ENCODE measurements at regions of chr7 and their contacts with region 1.

Region 1: GRCh38 chr7:151123822-151124464 is 37.7 kb downstream of the AGAP3 start:
- DNase-seq: peak; percentile 93
- ATAC-seq: peak; percentile 70
- H3K4me3 Mint-ChIP-seq: peak overlapping the region; percentile 30
- H3K27ac Mint-ChIP-seq: peak overlapping the region; percentile 95
- H3K4me1 Mint-ChIP-seq: peaks cover 31% of the 10 kb centered on the region
- H3K27me3 Mint-ChIP-seq: peaks cover 5% of the 10 kb centered on the region; the same call in 1 of the 2 replicates
- CTCF ChIP-seq: peak; percentile 95

Region 2: GRCh38 chr7:150898475-150899011 is 225.4 kb before region 1 on chr7:
- CTCF ChIA-PET with region 1: no interaction called
- POLR2A ChIA-PET with region 1: no interaction called
- DNase-seq: peak; percentile 86
- ATAC-seq: peak; percentile 75
- H3K4me3 Mint-ChIP-seq: no peak overlapping the region
- H3K27ac Mint-ChIP-seq: no peak overlapping the region
- H3K4me1 Mint-ChIP-seq: peaks cover 37% of the 10 kb centered on the region
- H3K27me3 Mint-ChIP-seq: peaks cover 59% of the 10 kb centered on the region
- CTCF ChIP-seq: peak; percentile 90

Region 3: DNA sequence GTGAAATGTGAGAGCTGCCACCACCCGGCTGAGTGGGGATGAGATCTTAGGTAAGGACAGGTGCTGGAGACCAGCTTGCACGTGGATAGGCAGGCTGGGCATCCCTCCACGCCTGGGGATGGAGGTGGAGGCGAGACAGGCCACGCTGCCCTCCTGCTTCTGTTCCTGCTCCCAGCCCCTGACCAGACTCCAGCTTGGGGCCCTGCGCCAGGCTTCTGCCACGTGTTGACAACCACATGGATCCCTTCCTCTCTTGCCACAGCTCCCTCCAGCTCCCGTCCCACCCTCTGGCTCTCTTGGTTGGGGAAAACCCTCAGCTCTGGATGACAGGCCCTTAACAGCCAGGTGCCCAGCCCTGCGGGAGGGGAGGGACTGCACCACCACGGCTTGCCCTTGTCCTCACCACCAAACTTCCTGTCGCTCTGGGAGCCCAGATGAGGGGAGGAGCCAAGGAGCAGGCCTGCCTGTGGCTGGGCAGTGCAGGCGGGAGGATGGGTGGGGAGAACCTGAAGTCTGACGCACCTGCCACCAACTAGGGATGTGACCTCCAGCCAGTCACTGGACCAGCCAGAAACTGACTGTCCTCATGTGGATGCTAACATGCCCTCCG is 181.9 kb before region 1 on chr7:
- CTCF ChIA-PET with region 1: no interaction called
- POLR2A ChIA-PET with region 1: no interaction called
- DNase-seq: peak; percentile 60
- ATAC-seq: peak; percentile 76
- H3K4me3 Mint-ChIP-seq: no peak overlapping the region
- H3K27ac Mint-ChIP-seq: no peak overlapping the region
- H3K4me1 Mint-ChIP-seq: peaks cover 27% of the 10 kb centered on the region
- H3K27me3 Mint-ChIP-seq: no peaks in the 10 kb centered on the region; the same call in 1 of the 2 replicates
- CTCF ChIP-seq: no peak

Region 4: GRCh38 chr7:151137076-151137675 is 13.2 kb after region 1 on chr7:
- CTCF ChIA-PET with region 1: interaction called, 59 read pairs
- POLR2A ChIA-PET with region 1: no interaction called
- DNase-seq: peak; percentile 39
- ATAC-seq: peak; percentile 24
- H3K4me3 Mint-ChIP-seq: no peak overlapping the region
- H3K27ac Mint-ChIP-seq: no peak overlapping the region
- H3K4me1 Mint-ChIP-seq: peaks cover 21% of the 10 kb centered on the region
- H3K27me3 Mint-ChIP-seq: no peaks in the 10 kb centered on the region
- CTCF ChIP-seq: no peak

Region 5: DNA sequence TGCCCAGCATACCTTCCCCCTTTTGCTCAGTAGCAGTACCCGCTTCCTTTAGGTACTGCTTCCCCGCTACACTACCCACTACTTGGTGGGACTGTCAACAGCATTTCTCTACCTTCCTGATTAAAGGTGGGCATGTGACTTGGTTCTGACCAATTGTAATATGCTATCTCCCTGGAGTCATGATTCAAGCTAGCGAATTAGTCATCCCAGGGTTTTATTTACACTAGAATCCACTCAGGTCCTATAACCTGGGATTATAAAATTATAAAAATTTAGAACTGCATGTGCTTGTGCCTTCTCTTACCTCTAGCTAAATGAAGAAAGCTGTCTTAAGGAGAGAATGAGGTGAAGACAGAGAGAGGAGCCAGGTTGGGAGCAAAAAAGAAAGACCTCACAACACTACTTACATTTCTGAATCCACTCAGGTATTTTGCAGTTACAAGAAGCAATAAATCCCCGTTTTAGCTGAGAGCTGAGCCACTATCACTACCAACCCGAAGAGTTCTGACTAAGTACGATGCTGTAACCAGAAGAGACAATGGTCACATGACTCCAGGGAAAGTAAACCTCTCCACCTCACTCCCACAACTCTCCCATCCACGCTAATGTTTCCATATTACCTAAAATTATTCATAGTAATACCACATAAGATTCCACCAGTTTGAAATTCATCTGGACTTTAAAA is 33.8 kb after region 1 on chr7:
- CTCF ChIA-PET with region 1: interaction called, 10 read pairs
- POLR2A ChIA-PET with region 1: no interaction called
- DNase-seq: no peak
- ATAC-seq: peak; percentile 67
- H3K4me3 Mint-ChIP-seq: no peak overlapping the region
- H3K27ac Mint-ChIP-seq: no peak overlapping the region
- H3K4me1 Mint-ChIP-seq: 0 out of 2 replicates have a peak, but pooled peaks cover 3% of the 10 kb centered on the region
- H3K27me3 Mint-ChIP-seq: peaks cover 19% of the 10 kb centered on the region
- CTCF ChIP-seq: no peak

Region 6: DNA sequence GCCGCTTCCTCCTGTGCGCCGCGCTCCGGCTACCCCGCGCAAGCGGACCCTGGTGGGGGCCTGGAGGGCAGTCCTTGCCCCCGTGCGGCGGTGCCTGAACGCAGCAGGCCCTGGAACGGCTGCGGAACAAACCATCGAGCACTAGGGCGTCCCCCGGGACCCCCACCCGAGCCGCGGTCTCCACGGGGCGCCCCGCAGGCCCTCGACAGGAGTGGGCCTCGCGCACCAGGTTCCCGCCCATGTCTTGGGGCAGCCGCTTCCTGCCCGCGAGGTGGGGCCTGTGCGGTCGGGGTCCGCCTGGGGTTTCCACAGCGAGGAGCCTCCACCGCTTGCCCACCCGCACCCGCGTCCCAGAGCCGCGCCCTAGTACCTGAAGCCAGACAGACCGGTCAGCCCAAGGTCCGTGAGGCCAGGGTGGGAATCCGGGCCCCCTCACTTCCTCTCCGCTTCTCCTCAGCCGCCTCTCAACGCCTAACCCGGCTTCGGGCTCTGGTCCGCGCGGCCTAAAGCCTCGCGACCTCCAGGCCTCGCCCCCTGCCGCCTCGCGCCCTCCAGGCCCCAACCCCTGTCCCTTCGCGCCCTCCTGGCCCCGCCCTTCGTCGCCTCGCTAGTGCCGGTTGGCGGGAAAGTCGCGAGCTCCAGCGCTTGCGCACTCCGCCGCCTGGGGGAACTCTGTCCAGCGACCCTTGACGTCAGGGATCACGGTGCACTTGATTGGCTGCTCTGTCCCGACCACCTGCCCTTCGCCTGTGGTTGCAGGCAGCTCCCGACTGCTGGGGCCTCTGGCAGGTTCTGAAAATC is 50.5 kb after region 1 on chr7:
- CTCF ChIA-PET with region 1: interaction called, 59 read pairs
- POLR2A ChIA-PET with region 1: no interaction called
- DNase-seq: peak; percentile 82
- ATAC-seq: peak; percentile 62
- H3K4me3 Mint-ChIP-seq: no peak overlapping the region
- H3K27ac Mint-ChIP-seq: no peak overlapping the region
- H3K4me1 Mint-ChIP-seq: peaks cover 12% of the 10 kb centered on the region
- H3K27me3 Mint-ChIP-seq: peaks cover 84% of the 10 kb centered on the region
- CTCF ChIP-seq: no peak

Region 7: GRCh38 chr7:151226875-151227782 is 103.2 kb after region 1 on chr7 and contains the start of gene ABCF2:
- CTCF ChIA-PET with region 1: interaction called, 12 read pairs
- POLR2A ChIA-PET with region 1: interaction called, 7 read pairs
- DNase-seq: peak; percentile 100
- ATAC-seq: peak; percentile 98
- H3K4me3 Mint-ChIP-seq: peak within 1 kb of the TSS; percentile 95
- H3K27ac Mint-ChIP-seq: peak within 1 kb of the TSS; percentile 100
- H3K4me1 Mint-ChIP-seq: peaks cover 30% of the 10 kb centered on the region
- H3K27me3 Mint-ChIP-seq: no peaks in the 10 kb centered on the region
- CTCF ChIP-seq: no peak
- total RNA-seq, gene ABCF2: 41.3 to 43.7 TPM (median 43.5 TPM) in 3 replicates

Measured in WTC11 (cell line).